Caco-2 (cell line): ENCODE measurements at regions of chr12 and their contacts with region 1.

Region 1: GRCh38 chr12:108950991-108951739 is 69.7 kb downstream of the SVOP start:
- DNase-seq: peak; percentile 70 to 76
- H3K4me3 ChIP-seq: no peak overlapping the region
- H3K4me3 Mint-ChIP-seq: no peak overlapping the region
- H3K27ac Mint-ChIP-seq: no peak overlapping the region
- H3K4me1 ChIP-seq: no peaks in the 10 kb centered on the region
- H3K4me1 Mint-ChIP-seq: peaks cover 8% of the 10 kb centered on the region
- H3K27me3 ChIP-seq: no peaks in the 10 kb centered on the region
- H3K27me3 Mint-ChIP-seq: peaks cover 2% of the 10 kb centered on the region
- CTCF ChIP-seq: peak; percentile 90 to 91

Region 2: DNA sequence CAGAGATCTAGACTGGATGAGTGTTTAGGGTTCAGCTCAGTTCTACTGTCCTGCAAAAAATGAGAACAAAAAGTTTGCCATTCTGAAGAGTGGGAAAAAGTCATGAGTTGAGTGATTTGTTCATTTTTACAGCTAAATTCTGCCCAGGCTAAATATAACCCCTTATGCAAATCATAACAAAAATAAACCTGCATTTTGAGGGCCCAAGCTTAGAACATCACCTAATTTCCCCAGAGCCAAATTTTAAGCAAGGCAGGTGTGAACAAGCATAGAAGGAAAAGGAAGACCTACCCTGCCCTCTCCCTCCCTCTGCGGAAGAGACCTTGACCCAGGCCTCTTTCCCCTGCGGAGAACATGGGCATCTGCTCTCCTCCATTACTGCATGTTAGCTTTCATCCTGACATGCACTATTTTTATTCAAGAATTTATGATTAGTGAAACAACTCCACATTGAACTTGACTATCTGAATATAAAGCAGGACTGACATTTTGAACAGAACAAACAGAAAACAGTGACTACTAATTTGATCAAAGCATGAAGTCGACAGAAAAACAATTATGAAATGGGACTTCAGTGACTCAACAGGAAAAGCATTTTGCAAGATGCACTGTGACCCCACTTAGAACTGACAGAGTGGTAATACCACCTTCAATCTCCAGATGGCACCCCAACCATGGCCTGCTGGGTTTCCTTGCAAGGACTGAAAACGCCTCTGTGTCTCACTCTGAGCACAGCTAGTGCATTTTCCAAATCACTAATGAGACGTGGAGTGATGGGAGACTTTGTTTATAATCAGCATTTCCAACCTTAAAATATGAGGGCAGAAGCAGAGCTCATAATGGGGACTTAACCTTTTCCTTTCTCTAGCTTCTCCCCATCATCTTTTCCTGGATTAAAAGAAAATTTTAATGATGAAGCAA is 286.6 kb before region 1 on chr12:
- CTCF ChIA-PET with region 1: no interaction called
- POLR2A ChIA-PET with region 1: no interaction called
- intact Hi-C with region 1: loop called (anchors 1 kb)
- DNase-seq: peak; percentile 84 to 90
- H3K4me3 ChIP-seq: no peak overlapping the region
- H3K4me3 Mint-ChIP-seq: no peak overlapping the region
- H3K27ac Mint-ChIP-seq: no peak overlapping the region
- H3K4me1 ChIP-seq: peaks cover 6% of the 10 kb centered on the region; the same call in 1 of the 2 replicates
- H3K4me1 Mint-ChIP-seq: peaks cover 11% of the 10 kb centered on the region
- H3K27me3 ChIP-seq: no peaks in the 10 kb centered on the region
- H3K27me3 Mint-ChIP-seq: no peaks in the 10 kb centered on the region
- CTCF ChIP-seq: peak; percentile 86 to 88

Region 3: GRCh38 chr12:108803428-108804105 is 147.6 kb before region 1 on chr12:
- CTCF ChIA-PET with region 1: interaction called, 6 read pairs
- POLR2A ChIA-PET with region 1: no interaction called
- intact Hi-C with region 1: loop called (anchors 5 kb)
- DNase-seq: peak; percentile 70 to 84
- H3K4me3 ChIP-seq: no peak overlapping the region
- H3K4me3 Mint-ChIP-seq: no peak overlapping the region
- H3K27ac Mint-ChIP-seq: peak overlapping the region; percentile 35
- H3K4me1 ChIP-seq: peaks cover 11% of the 10 kb centered on the region; the same call in 1 of the 2 replicates
- H3K4me1 Mint-ChIP-seq: no peaks in the 10 kb centered on the region
- H3K27me3 ChIP-seq: no peaks in the 10 kb centered on the region
- H3K27me3 Mint-ChIP-seq: no peaks in the 10 kb centered on the region
- CTCF ChIP-seq: peak; percentile 89 to 90

Region 4: GRCh38 chr12:108850854-108851573 is 100.2 kb before region 1 on chr12:
- CTCF ChIA-PET with region 1: no interaction called
- POLR2A ChIA-PET with region 1: no interaction called
- intact Hi-C with region 1: no loop called
- DNase-seq: no peak
- H3K4me3 ChIP-seq: no peak overlapping the region
- H3K4me3 Mint-ChIP-seq: no peak overlapping the region
- H3K27ac Mint-ChIP-seq: no peak overlapping the region
- H3K4me1 ChIP-seq: peaks cover 22% of the 10 kb centered on the region
- H3K4me1 Mint-ChIP-seq: peaks cover 31% of the 10 kb centered on the region
- H3K27me3 ChIP-seq: no peaks in the 10 kb centered on the region
- H3K27me3 Mint-ChIP-seq: no peaks in the 10 kb centered on the region
- CTCF ChIP-seq: no peak

Region 5: GRCh38 chr12:108884116-108885012 is 66.8 kb before region 1 on chr12:
- CTCF ChIA-PET with region 1: interaction called, 9 read pairs
- POLR2A ChIA-PET with region 1: no interaction called
- intact Hi-C with region 1: loop called (anchors 1 kb)
- DNase-seq: peak; percentile 55 to 60
- H3K4me3 ChIP-seq: no peak overlapping the region
- H3K4me3 Mint-ChIP-seq: no peak overlapping the region
- H3K27ac Mint-ChIP-seq: no peak overlapping the region
- H3K4me1 ChIP-seq: no peaks in the 10 kb centered on the region
- H3K4me1 Mint-ChIP-seq: no peaks in the 10 kb centered on the region
- H3K27me3 ChIP-seq: no peaks in the 10 kb centered on the region
- H3K27me3 Mint-ChIP-seq: no peaks in the 10 kb centered on the region
- CTCF ChIP-seq: peak; percentile 41 to 67

Region 6: DNA sequence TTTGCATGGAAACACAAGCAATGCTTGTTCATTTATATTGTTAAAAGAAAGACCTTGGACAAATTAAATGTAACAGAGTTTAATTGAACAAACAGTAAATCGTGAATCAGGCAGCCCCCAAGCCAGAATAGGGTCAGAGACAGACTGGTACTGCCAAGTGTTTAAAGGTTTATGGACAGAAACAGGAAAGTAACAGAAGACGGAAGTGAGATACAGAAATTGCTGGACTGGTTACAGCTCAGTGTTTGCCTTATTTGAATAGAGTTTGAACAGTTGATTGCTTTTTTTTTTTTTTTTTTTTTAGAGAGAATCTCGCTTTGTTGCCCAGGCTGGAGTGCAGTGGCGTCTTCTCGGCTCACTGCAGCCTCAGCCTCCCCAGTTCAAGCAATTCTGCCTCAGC is 21.0 kb before region 1 on chr12:
- CTCF ChIA-PET with region 1: interaction called, 11 read pairs
- POLR2A ChIA-PET with region 1: interaction called, 3 read pairs
- intact Hi-C with region 1: no loop called
- DNase-seq: no peak
- H3K4me3 ChIP-seq: no peak overlapping the region
- H3K4me3 Mint-ChIP-seq: no peak overlapping the region
- H3K27ac Mint-ChIP-seq: peak overlapping the region; percentile 55
- H3K4me1 ChIP-seq: peaks cover 20% of the 10 kb centered on the region
- H3K4me1 Mint-ChIP-seq: peaks cover 25% of the 10 kb centered on the region
- H3K27me3 ChIP-seq: no peaks in the 10 kb centered on the region
- H3K27me3 Mint-ChIP-seq: no peaks in the 10 kb centered on the region
- CTCF ChIP-seq: no peak

Region 7: DNA sequence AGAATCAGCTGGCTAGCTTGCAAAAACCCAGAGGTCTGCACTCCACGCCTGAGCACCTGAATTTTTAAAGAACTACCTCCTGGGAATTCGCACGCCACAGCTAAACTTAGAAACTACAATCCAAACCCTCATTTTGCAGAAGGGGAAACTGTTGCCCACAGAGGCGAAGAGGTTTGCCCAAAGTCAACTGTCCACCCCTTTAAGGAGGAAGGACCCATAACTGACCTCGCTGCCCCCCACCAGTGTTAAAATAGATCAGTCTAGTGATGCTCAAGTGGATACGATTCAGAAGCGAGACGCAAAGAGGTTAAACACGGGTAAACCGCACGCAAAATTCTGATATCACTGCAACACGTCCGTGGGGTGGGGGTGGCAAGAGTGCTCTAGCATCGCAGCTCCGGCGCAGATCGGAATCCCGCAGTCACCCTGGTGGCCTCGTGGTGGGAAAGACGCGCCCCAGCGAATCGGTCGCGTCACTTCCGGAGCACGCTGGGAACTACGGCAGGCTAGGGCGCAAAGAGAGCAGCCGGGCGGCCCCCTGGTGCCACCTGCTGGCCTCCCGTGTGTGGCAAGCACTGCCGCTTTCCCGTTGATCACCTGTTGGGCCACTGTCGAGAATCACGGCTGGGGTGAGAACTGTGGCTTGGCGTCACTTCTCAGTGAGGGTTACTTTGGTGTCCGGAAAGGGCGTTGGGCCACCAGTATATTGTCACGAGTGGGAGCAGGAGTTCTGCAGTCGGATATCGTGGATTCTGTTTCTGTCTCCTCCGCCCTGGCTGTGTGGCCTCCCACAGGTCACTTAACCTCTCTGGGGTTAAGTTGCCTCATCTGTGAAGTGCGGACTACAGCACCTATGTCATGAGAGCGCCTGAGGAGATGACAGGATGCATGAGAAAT is 142.1 kb after region 1 on chr12 and contains the start of gene ALKBH2:
- CTCF ChIA-PET with region 1: interaction called, 3 read pairs
- POLR2A ChIA-PET with region 1: no interaction called
- intact Hi-C with region 1: loop called (anchors 1 kb)
- DNase-seq: peak; percentile 93 to 94
- H3K4me3 ChIP-seq: peak within 1 kb of the TSS; percentile 49
- H3K4me3 Mint-ChIP-seq: peak within 1 kb of the TSS; percentile 77
- H3K27ac Mint-ChIP-seq: peak within 1 kb of the TSS; percentile 81
- H3K4me1 ChIP-seq: no peaks in the 10 kb centered on the region; the same call in 1 of the 2 replicates
- H3K4me1 Mint-ChIP-seq: peaks cover 8% of the 10 kb centered on the region
- H3K27me3 ChIP-seq: no peaks in the 10 kb centered on the region
- H3K27me3 Mint-ChIP-seq: no peaks in the 10 kb centered on the region
- CTCF ChIP-seq: peak; percentile 94 to 95
- total RNA-seq, gene ALKBH2: 38.3 and 41.4 TPM in 2 replicates